Activated CD8-positive, alpha-beta memory T cell treated with anti-CD3 and anti-CD28 coated beads, Interleukin-2, amount 10 ng/mL, durations not matched to agents 7 days and 5 days (primary cell): ENCODE measurements at regions of chr1 and their contacts with region 1.

Region 1: GRCh38 chr1:46489638-46490405 is at the start of gene DMBX1:
- DNase-seq: peak; percentile 59
- ATAC-seq: peak; percentile 83
- H3K4me3 Mint-ChIP-seq: peak within 1 kb of the TSS; percentile 70
- H3K27ac Mint-ChIP-seq: peak within 1 kb of the TSS; percentile 55
- H3K4me1 Mint-ChIP-seq: peaks cover 19% of the 10 kb centered on the region
- H3K27me3 Mint-ChIP-seq: peaks cover 96% of the 10 kb centered on the region
- total RNA-seq, gene DMBX1: 0.15 TPM in 1 of 2 experiments, not detected in the other

Region 2: DNA sequence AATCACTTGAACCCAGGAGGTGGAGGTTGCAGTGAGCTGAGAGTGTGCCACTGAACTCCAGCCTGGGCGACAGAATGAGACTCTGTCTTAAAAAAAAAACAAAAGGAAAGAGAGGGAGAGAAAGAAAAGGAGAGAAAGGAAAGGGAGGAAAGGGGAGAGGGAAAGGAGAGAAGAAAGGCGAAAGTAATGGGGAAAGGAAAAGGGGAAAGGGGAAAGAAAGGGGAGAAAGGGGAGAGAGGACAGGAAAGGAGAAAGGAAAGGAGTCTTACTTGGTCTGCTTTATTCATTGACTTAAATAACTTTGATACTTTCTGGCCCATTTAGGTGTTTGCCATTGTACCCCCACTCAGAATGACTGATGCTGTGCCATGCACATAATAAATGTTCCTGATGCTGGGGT is 137.5 kb before region 1 on chr1:
- CTCF ChIA-PET with region 1: no interaction called
- DNase-seq: no peak
- ATAC-seq: no peak
- H3K4me3 Mint-ChIP-seq: no peak overlapping the region
- H3K27ac Mint-ChIP-seq: no peak overlapping the region
- H3K4me1 Mint-ChIP-seq: peaks cover 8% of the 10 kb centered on the region
- H3K27me3 Mint-ChIP-seq: no peaks in the 10 kb centered on the region

Region 3: DNA sequence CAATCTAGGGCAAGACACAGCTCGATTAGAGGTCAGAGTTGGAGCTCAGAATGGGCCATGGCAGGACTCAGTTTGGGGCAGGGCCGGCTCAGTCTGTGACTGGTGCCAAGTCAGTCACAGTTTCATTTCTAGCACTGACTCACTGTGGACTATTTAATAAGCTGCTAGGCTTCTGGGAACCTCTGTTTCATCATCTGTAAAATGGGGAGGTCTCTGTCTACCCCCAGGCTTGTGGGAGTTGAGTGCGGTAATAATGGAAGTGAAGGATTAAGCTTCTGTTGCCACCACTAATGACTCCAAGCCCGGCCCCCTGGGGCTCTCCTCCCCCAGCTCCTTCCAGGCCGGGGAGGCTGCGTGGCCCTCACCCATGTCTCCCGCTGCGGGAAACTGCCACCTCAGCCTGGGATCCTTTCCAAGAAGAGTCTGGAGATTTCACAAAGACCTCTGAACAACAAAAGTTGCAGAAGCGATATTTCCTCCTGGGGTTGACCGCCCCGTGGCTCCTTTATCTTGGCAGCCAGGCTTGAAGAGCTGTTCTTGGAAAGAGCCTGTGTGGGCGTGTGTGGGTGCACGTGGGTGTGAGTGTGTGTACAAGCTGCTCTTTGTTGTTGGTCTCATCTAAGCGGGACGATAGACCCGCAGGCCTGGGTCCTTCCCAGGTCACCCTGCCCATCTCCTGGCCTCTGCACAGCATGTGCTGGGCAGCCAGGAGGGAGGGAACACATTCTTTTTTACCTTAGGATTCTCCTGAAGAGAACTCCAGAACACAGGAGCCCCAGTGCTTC is 32.6 kb after region 1 on chr1:
- CTCF ChIA-PET with region 1: interaction called, 35 read pairs
- DNase-seq: peak; percentile 60
- ATAC-seq: peak; percentile 91
- H3K4me3 Mint-ChIP-seq: no peak overlapping the region
- H3K27ac Mint-ChIP-seq: peak overlapping the region; percentile 71
- H3K4me1 Mint-ChIP-seq: peaks cover 32% of the 10 kb centered on the region
- H3K27me3 Mint-ChIP-seq: peaks cover 28% of the 10 kb centered on the region